ENCODE measurements at regions of chrX and their contacts with region 1.

Region 1: DNA sequence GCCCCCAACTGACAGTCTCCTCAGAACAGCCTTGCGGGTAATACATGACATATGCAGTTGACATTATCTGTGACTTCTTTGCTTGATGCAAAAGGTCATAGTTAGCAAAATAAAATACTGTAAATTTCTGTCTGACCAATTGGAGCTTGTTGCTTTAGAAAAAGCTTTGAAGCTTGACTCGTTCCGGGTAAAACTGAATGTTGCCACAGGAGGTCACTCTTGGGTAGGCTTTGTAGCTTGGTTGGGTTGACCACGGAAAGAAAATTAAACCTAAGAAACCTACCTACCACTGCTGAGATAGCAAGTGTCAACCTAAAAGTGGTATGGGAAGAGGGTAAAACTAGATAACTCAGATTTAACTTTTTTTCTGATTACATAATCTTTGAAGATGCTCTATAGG is 23.2 kb downstream of the PRPS2 start:
- DNase-seq: peak in 28 of 42 donors; percentile 13 to 68 (median 50)

Region 2: GRCh38 chrX:12526296-12526695 is 288.1 kb before region 1 on chrX:
- intact Hi-C with region 1: no loop called
- DNase-seq: no peak

Region 3: DNA sequence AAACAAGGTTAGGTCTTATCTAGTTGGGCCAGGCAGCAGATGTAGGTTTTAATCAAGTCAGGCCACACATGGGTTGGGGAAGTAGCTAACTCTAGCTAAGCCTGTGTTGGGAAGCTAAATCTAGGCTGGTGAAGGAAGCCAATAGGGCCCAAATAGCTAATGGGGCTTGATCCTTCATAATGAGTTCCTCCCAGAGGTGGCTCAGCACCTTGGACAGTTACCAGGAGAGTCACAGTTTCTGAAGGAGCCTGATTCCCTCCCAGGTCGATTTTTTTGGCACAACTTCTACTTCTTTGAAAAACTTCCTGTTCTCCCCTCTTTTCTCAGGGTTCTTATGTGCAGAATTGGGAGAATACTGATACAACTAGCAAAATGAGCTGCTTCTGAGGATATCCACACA is 265.7 kb before region 1 on chrX:
- intact Hi-C with region 1: no loop called
- DNase-seq: no peak

Region 4: GRCh38 chrX:12894074-12895030 is 79.9 kb after region 1 on chrX:
- intact Hi-C with region 1: loop called (anchors 10 kb)
- DNase-seq: peak in 41 of 42 donors; percentile 5 to 75 (median 49)

Measured in head of caudate nucleus (tissue), 42 donors.